ENCODE measurements at regions of chr6 and their contacts with region 1.

Region 1: GRCh38 chr6:169701954-169702839 is at the starts of genes C6orf120 and WDR27:
- DNase-seq: peak; percentile 93
- ATAC-seq: peak; percentile 88
- H3K4me3 ChIP-seq: peak within 1 kb of the TSS; percentile 98
- H3K27ac ChIP-seq: peak within 1 kb of the TSS; percentile 75
- H3K4me1 ChIP-seq: peaks cover 23% of the 10 kb centered on the region
- H3K27me3 ChIP-seq: no peaks in the 10 kb centered on the region
- CTCF ChIP-seq: no peak
- total RNA-seq, gene C6orf120: 17.0 and 18.6 TPM in 2 replicates
- total RNA-seq, gene WDR27: 20.0 and 28.3 TPM in 2 replicates

Region 2: DNA sequence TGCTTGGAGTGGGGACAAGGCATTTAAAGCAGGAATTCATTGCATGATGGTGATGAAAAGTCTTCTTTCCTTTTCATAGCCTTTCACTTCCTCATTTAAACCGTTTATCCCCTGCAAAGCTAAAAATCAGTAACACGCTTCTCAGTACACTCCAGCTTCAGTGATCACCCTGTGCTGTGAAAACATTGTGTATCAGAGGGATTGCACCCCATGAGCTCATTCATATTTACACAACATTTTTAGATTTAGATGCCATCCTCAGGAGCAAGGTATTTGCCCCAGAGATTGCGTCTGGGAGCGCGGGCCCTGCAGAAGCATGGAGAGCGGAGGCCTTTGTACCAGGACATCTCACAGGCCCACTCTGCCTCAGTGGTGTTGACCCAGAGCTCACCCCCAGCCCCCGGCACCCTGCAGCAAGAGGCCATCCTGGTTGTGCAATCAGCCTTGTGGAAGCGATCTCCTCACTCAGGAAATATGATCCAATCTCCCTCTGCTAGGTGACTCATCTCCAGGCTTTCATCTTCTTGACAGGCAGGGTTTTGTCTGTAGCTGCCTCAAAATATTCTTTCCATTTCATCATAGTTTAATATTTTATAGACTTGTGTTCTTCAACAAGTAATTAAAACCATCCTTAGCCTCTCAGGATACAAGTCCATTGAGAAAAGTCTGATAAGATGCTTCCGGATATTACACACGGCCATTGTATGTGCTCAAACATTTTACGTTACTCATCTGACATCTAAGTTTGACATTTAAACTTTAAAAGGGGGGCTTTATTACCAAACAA is 409.7 kb before region 1 on chr6:
- CTCF ChIA-PET with region 1: no interaction called
- POLR2A ChIA-PET with region 1: no interaction called
- intact Hi-C with region 1: no loop called
- DNase-seq: peak; percentile 57
- ATAC-seq: no peak
- H3K4me3 ChIP-seq: no peak overlapping the region
- H3K27ac ChIP-seq: peak overlapping the region; percentile 25; the same call in 1 of the 2 replicates
- H3K4me1 ChIP-seq: peaks cover 14% of the 10 kb centered on the region; the same call in 1 of the 2 replicates
- H3K27me3 ChIP-seq: no peaks in the 10 kb centered on the region
- CTCF ChIP-seq: no peak

Region 3: GRCh38 chr6:169751242-169752073 is 49.3 kb after region 1 on chr6 and contains the starts of genes DYNLT2 and ERMARD:
- CTCF ChIA-PET with region 1: no interaction called
- POLR2A ChIA-PET with region 1: no interaction called
- intact Hi-C with region 1: loop called (anchors 5 kb)
- DNase-seq: peak; percentile 92
- ATAC-seq: peak; percentile 90
- H3K4me3 ChIP-seq: peak within 1 kb of the TSS; percentile 83
- H3K27ac ChIP-seq: peak within 1 kb of the TSS; percentile 70
- H3K4me1 ChIP-seq: peaks cover 8% of the 10 kb centered on the region; the same call in 1 of the 2 replicates
- H3K27me3 ChIP-seq: no peaks in the 10 kb centered on the region
- CTCF ChIP-seq: no peak
- total RNA-seq, gene DYNLT2: 0.51 and 1.5 TPM in 2 replicates
- total RNA-seq, gene ERMARD: 16.3 and 24.2 TPM in 2 replicates

Region 4: DNA sequence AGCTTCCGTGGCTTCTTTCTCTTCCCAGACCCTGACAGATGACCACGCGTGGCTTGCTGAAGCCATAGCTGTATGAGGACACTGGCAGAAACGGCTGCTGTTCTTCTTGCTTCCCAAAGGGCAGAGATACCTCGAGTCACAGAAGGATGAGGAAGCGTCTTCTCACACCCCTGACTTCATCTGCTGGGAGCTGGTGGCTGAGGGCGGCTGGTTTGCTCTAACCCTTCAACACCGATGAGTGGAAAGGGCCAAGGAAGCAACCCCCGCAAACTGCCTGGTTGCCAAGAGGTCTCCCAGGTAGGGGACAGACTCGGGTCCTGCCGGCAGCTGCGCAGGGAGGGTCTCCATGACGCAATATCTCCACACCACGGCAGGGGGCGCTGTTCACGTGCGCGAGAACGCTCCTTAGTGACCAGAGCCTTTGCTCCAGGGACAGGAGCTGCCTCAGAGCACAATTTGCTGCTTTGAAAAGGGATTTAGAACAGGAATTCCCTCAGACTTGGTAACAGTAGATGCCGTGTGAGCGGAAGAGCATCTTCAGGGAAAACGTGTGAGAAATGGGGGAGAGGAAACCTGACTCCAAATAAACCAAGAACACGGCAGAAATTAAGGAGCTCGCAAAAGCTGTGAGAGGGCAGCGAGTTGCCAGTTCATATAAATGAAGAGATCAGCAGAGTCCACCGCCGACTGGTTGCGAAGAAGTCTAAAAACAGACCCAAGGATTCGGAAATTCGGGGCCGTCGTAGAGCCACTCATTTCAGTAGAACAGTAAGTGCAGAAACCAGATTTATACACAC is 129.5 kb after region 1 on chr6:
- CTCF ChIA-PET with region 1: no interaction called
- POLR2A ChIA-PET with region 1: no interaction called
- intact Hi-C with region 1: no loop called
- DNase-seq: peak; percentile 71
- ATAC-seq: peak; percentile 95
- H3K4me3 ChIP-seq: peak overlapping the region; percentile 39
- H3K27ac ChIP-seq: no peak overlapping the region
- H3K4me1 ChIP-seq: peaks cover 13% of the 10 kb centered on the region; the same call in 1 of the 2 replicates
- H3K27me3 ChIP-seq: peaks cover 6% of the 10 kb centered on the region; the same call in 1 of the 2 replicates
- CTCF ChIP-seq: peak; percentile 88

Measured in PC-3 (cell line).